ENCODE measurements at regions of chr19 and their contacts with region 1.

Region 1: GRCh38 chr19:8355631-8356402 is 8.1 kb upstream of the ANGPTL4 start:
- DNase-seq: no peak
- ATAC-seq: no peak

Region 2: DNA sequence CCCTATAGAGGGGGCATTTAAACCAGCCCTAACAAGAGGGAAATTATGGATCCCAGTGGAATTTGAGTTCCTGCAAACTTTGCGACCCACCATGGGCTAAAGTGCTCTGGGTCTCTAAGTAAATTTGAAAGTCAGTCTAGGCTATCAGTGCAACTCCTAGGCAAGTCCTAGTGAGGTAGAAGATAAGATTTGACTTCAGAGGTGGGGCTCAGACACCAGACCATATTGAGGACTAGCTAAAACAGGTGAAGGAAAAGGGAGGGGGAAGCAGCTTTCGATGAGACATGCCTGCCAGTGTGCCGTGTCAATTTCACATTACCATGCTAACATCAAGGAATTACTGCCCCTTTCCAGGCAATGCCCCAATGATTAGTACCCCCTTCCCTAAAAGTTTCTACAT is 86.1 kb before region 1 on chr19:
- intact Hi-C with region 1: no loop called
- DNase-seq: no peak
- ATAC-seq: no peak

Region 3: GRCh38 chr19:8373867-8374813 is 18.3 kb after region 1 on chr19:
- intact Hi-C with region 1: no loop called
- DNase-seq: peak; percentile 70
- ATAC-seq: peak; percentile 61

Region 4: DNA sequence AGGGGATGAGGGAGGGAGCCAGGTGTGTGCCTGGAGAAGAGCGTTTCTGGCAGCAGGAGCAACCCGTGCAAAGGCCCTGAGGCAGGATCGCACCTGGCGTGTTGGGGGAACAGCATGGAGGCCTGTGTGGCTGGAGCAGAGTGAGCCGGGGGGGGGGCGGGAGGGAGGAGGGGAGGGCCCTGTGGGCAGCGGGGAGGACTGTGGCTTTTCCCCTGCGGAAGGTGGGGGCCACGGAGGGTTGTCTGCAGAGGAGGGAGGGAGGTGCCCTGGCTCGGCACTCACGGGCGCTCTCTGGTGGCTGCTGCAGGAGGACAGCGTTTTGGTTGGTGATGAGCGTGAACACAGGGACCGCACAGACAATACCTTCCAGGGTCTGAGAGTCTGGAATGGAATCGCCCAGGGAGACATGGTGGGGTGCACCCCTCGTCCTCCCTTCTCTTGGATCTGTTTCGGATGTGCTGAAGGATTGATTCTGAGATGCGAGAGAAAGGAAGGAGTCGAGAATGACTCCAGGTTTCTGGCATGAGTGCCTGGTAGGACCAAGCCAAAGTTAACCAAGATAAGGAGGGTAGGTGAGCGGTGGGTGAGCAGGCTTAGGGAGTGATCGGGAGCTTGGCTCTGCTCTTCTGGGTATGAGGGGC is 40.9 kb after region 1 on chr19:
- intact Hi-C with region 1: loop called (anchors 5 kb)
- DNase-seq: peak; percentile 81
- ATAC-seq: peak; percentile 38

Region 5: DNA sequence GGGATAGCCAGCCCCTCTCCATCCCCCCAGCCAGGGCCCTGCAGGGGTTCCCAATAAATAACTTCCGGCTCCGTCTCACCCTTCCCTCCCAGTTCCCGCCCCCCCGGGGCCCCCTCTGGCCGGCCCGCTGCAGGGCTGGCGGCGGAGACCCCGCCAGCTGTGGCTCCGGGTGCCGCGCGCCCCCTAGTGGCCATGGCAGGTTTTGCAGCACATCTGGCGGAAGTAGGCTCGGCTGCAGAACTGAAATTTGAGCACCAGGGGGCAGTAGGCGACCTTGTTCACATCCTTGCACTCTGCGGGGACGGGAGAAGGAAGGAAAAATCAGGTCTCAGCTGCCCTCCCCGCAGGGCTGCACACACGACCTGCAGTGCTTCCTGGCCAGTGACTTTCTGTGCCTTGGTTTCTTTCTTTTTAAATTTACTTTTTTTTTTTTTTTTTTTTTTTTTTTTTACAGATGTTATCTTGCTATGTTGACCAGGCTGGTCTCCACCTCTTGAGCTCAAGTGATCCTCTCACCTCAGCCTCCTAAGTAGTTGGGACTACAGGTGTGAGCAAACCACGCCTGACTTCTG is 225.0 kb after region 1 on chr19:
- intact Hi-C with region 1: loop called (anchors 10 kb)
- DNase-seq: peak; percentile 90
- ATAC-seq: peak; percentile 74